Dorsolateral prefrontal cortex (tissue), 120 donors: ENCODE measurements at regions of chr12 and their contacts with region 1.

Region 1: DNA sequence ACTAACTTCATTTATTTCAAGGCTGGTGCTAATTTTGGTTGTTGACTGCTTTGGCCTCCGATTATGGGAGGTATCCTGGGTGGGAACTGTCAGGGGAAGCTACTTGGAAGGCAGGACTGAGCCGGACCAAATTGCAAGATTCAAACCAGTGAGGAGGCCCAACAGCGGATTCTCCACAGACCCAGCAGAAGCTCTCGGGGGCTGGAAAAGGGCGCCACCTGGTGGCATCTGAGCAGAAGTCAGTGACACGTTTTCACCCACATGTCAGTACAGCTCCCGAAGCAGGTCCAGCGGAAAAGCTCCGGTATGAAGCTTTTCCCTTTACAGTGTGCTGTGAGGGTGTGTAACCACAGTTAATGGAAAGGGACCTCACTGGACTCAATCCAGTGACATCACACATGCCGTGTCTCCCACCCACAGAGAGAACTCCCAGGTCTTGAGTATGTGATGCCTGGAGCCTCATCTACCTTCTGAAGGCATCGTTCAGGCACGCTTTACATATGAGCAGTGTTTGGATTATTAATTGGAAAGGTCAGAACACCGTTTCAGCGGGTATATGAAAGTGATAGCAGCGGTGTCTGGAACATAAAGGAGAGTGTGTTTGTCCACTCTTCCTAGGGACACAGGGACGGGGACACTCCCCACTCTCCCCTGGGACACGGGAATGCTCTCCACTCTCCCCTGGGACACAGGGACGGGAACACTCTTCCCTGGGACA is 3.6 kb upstream of the P2RX2 start:
- DNase-seq: peak; percentile 78 to 91 (median 83)
- H3K4me3 ChIP-seq: no peak overlapping the region
- H3K27ac ChIP-seq: no peak overlapping the region
- H3K27me3 ChIP-seq: peaks cover 4 to 63% (median 44%) of the 10 kb centered on the region in 45 donors
- CTCF ChIP-seq: peak; percentile 78 to 96 (median 92)

Region 2: DNA sequence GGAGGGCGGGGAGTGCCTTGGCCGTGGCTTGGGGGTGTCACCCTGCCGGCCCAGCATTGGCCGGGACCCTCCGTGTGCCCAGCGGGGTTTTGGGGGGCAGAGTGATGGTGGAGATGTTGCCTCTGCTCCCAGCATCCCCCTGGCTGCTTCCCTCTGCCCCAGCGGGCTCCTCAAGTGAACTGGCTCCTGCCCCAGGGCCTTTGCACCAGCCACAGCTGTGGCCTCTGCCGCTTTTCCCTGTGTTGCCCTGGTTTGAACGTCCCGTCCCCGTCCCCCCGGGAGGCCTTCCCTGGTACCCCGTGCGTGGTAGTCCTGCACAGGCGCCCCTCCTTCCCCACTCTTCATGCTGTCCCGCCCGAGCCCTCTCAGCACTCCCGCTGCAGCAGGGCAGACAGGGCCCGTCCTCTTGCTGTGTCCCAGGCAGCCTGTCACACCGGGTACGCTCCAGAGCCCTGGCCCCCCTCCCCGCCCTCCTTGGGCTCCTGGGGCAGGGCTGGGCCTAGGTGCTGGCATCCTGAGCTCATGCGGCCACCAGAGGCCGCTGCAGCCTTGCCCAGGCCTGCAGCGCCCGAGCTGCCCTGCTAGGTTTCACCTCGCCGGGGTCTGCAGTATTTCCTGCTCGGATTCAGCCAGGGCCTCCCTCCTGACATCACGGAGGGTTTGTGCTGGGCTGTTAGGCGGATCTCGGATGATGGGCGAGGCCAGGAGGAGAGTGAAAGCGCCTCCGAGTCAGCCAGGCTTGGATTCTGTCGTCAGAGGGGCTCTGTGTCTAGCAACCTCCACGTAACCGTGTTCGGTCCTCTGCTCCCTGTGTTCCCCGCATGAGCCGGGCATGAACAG is 461.3 kb before region 1 on chr12:
- intact Hi-C with region 1: loop called in 1 of 2 experiments (anchors 5 kb)
- DNase-seq: peak; percentile 39 to 78 (median 53)
- H3K4me3 ChIP-seq: peak overlapping the region in 20 of 59 donors; percentile 11 to 56 (median 32)
- H3K27ac ChIP-seq: peak overlapping the region in 1 of 59 donors; percentile 14
- H3K27me3 ChIP-seq: no peaks in the 10 kb centered on the region
- CTCF ChIP-seq: peak; percentile 36 to 93 (median 84)

Region 3: DNA sequence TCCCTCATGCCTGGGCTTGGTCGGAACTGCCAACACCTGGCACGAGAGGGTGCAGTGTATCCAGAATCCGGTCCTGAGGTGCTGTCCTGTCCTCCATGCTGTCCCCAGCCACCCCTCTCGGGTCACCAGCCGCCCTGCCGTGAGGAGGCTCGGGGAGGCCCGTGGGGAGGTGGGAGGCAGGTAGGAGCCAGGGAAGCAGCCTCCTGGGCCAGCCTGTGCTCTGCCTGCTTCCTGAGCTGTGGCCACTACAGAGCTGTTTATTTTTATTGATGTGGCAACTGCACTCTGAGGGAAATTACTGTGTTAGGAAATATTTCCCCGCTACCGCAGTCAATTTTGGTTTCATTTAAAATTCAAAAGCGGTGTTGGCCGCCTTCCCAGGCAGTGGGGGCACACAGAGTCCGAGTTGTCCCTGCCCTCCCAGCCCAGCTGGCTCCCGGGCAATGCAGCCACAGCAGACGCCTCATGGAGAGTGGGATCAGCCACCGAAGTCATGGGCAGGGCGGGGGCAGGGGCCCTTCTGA is 452.4 kb before region 1 on chr12:
- intact Hi-C with region 1: loop called in 1 of 2 experiments (anchors 10 kb)
- DNase-seq: peak in 2 of 10 donors; percentile 27 to 47
- H3K4me3 ChIP-seq: peak overlapping the region in 32 of 59 donors; percentile 5 to 51 (median 26)
- H3K27ac ChIP-seq: peak overlapping the region in 11 of 59 donors; percentile 11 to 64 (median 37)
- H3K27me3 ChIP-seq: peaks cover 0 to 2% (median 0%) of the 10 kb centered on the region in 45 donors
- CTCF ChIP-seq: no peak

Region 4: GRCh38 chr12:132414634-132415326 is 200.2 kb before region 1 on chr12:
- intact Hi-C with region 1: loop called (anchors 1 to 2 kb)
- DNase-seq: peak in 9 of 10 donors; percentile 55 to 87 (median 72)
- H3K4me3 ChIP-seq: peak overlapping the region in 5 of 59 donors; percentile 5 to 31 (median 20)
- H3K27ac ChIP-seq: no peak overlapping the region
- H3K27me3 ChIP-seq: peaks cover 0 to 55% (median 30%) of the 10 kb centered on the region in 45 donors
- CTCF ChIP-seq: peak; percentile 52 to 99 (median 93)

Region 5: GRCh38 chr12:132523576-132524331 is 91.3 kb before region 1 on chr12:
- intact Hi-C with region 1: loop called in 1 of 2 experiments (anchors 5 kb)
- DNase-seq: peak; percentile 74 to 89 (median 82)
- H3K4me3 ChIP-seq: no peak overlapping the region
- H3K27ac ChIP-seq: peak overlapping the region in 53 of 59 donors; percentile 3 to 90 (median 69)
- H3K27me3 ChIP-seq: no peaks in the 10 kb centered on the region
- CTCF ChIP-seq: peak; percentile 58 to 95 (median 90)